Posterior vena cava (tissue), 2 donors: ENCODE measurements at regions of chr2 and their contacts with region 1.

Region 1: GRCh38 chr2:24682304-24682703 is 110.9 kb downstream of the PTRHD1 start:
- DNase-seq: no peak

Region 2: DNA sequence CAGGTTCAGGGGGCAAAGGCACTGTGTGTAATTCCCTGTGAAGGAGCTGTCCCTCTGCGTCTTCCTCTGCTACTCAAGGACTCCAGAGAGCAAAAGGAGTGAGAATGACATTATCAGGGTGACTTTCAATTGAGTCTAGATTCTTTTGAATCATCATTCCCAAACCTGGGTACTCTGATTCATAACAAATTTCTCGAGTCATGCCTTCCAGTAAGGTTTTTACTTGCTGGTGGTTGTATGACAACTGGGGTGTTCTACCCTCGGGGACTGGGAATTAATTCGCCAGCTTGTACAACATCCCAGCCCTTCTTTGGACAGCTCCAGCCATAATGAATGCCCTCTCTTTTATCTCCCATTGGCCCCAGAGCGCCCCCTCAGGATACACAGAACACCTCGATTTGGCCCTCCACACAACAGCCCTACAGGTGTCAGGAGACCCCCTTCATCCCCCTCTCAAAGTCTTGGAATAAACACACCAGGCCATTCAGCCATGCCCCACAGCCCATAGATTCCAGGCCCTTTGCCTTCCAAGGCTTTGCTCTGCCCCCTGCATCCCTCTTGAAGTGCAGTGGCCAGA is 1042.8 kb before region 1 on chr2:
- intact Hi-C with region 1: no loop called
- DNase-seq: no peak

Region 3: DNA sequence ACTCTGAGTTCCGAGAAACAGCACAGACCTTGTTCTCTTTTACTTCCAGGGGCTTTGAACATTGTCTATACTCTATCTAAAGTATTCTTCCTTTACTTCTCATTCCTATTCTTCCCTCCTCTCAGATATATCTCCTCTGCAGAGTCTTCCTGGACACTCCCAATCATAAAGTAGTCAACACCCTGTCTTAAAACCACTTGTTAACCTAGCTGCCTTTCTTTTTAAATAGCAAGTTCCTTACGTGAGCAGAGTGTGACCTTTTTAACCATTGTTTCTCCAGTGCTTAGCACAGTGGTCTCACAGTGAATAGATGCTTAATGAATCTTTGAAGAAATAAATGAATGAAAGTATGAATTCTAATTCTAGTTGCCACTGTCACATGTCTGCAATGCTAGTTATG is 63.5 kb after region 1 on chr2:
- intact Hi-C with region 1: loop called in 1 of 2 experiments (anchors 2 kb)
- DNase-seq: no peak

Region 4: DNA sequence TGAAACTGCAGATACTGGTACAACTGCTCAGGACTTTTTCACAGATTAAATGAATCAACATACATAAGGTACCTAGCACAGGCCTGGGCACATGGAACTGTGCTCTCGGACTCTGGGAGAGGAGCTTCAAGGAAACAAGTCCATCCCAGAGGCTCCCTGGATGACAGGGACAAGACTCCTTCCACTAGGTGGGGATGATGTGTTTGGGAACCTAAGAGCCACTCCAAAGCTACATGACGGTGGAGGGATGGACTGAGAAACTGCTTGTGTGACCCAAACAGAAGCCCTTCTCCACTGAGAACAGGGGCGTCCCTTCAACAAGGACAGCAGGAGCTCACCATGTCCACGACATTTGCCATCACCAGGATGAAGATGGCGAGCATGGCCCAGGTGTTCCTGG is 148.1 kb after region 1 on chr2:
- intact Hi-C with region 1: no loop called
- DNase-seq: no peak